CD8-positive, alpha-beta T cell (primary cell): ENCODE measurements at regions of chr4 and their contacts with region 1.

Region 1: DNA sequence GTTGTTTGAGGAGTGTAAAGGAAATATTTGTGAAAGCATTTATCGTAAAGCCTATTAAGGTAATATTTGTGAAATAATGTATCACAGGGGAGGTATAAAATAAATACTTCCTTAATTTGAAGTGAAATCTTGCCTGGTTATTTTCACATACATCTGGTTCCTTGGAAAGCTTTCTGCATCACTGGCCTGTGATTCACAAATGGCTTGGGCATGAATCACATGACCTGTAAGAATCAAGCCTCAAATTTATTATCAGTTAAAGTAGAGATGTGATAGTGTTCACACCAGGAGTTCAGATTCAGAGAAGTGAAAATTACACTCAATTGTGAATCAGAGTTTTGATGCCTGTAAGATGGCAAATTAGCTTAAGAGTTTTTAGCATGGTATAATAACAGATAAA is 1911.4 kb downstream of the STIM2 start:
- DNase-seq: no peak
- ATAC-seq: no peak
- H3K4me3 ChIP-seq: no peak overlapping the region
- H3K4me3 Mint-ChIP-seq: no peak overlapping the region
- H3K27ac ChIP-seq: no peak overlapping the region
- H3K27ac Mint-ChIP-seq: no peak overlapping the region
- H3K4me1 ChIP-seq: no peaks in the 10 kb centered on the region
- H3K4me1 Mint-ChIP-seq: no peaks in the 10 kb centered on the region
- H3K27me3 ChIP-seq: no peaks in the 10 kb centered on the region
- H3K27me3 Mint-ChIP-seq: no peaks in the 10 kb centered on the region
- CTCF ChIP-seq: no peak

Region 2: GRCh38 chr4:28784188-28784587 is 12.1 kb after region 1 on chr4:
- CTCF ChIA-PET with region 1: no interaction called
- POLR2A ChIA-PET with region 1: no interaction called
- intact Hi-C with region 1: loop called in 1 of 2 experiments (anchors 2 kb)
- DNase-seq: no peak
- ATAC-seq: no peak
- H3K4me3 ChIP-seq: no peak overlapping the region
- H3K4me3 Mint-ChIP-seq: no peak overlapping the region
- H3K27ac ChIP-seq: no peak overlapping the region
- H3K27ac Mint-ChIP-seq: no peak overlapping the region
- H3K4me1 ChIP-seq: no peaks in the 10 kb centered on the region
- H3K4me1 Mint-ChIP-seq: no peaks in the 10 kb centered on the region
- H3K27me3 ChIP-seq: no peaks in the 10 kb centered on the region
- H3K27me3 Mint-ChIP-seq: no peaks in the 10 kb centered on the region
- CTCF ChIP-seq: no peak

Region 3: DNA sequence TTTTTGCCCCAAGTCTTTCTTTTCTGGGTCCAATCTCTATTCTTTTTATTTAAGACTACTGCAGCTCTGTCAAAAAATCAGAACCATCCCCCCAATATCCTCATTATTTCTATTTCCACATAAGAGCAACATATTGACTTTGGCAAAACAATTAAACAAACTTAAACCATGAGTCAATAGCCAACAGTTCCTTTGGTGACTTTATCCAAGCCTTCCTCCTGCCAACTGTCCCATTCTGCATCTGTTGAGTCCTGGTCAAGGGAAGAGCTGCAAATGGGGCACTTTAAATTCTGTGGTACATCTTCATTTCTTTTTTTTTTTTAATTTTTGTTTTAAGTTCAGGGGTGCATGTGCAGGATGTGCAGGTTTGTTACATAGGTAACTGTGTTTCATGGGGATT is 73.1 kb after region 1 on chr4:
- CTCF ChIA-PET with region 1: no interaction called
- POLR2A ChIA-PET with region 1: no interaction called
- intact Hi-C with region 1: no loop called
- DNase-seq: no peak
- ATAC-seq: no peak
- H3K4me3 ChIP-seq: no peak overlapping the region
- H3K4me3 Mint-ChIP-seq: no peak overlapping the region
- H3K27ac ChIP-seq: no peak overlapping the region
- H3K27ac Mint-ChIP-seq: no peak overlapping the region
- H3K4me1 ChIP-seq: no peaks in the 10 kb centered on the region
- H3K4me1 Mint-ChIP-seq: no peaks in the 10 kb centered on the region
- H3K27me3 ChIP-seq: no peaks in the 10 kb centered on the region
- H3K27me3 Mint-ChIP-seq: no peaks in the 10 kb centered on the region
- CTCF ChIP-seq: no peak